Ovary (tissue), 10 donors: ENCODE measurements at regions of chr1 and their contacts with region 1.

Region 1: GRCh38 chr1:31789259-31790065 is 25.3 kb upstream of the ADGRB2 start:
- DNase-seq: peak; percentile 93 to 98 (median 98)
- H3K4me3 ChIP-seq: peak overlapping the region; percentile 43
- H3K27ac ChIP-seq: peak overlapping the region; percentile 11 to 70
- H3K4me1 ChIP-seq: no peaks in the 10 kb centered on the region
- H3K27me3 ChIP-seq: no peaks in the 10 kb centered on the region
- CTCF ChIP-seq: peak; percentile 79 to 96 (median 91)
- EP300 ChIP-seq: no peak
- POLR2A ChIP-seq: peak; percentile 29

Region 2: DNA sequence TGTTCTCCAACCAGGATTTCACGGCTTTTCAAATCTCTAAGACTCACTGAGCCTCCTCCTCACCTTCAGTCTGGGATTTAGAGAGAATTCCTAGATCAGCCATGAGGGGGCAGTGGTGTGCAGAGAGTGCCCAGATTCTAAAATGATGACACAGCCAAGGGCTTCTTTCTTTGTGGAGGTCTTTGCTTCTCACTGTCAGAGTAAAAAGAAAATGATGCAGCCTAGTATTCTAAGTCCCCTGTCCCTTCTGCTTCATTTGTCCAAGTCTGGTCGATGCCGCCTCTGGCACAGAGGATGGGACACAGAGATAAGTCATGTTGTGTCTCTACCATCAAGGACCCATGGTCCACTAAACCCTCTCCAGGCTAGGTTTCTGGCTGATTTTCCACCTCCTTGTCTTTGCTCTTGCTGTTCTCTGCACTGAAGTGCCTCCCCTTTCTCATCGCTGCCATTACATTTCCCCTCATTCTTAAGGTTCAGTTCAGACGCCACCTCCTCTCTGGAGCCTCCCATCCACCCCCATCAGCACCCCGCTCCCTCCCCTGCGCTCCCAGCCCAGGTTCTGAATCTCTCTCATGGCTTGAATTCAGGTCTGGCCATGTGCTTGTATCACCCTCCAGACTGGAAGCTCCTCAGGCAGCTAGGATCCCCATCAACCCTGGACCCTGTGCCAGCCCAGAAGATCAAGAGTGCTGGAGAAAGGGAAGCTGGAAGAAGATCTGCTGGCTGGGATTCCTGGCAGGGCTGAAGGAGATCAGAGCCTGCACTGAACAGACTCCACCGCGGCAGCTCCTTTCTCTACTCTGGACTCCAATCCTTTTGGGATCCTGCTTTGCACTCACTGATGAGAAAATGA is 225.1 kb before region 1 on chr1:
- intact Hi-C with region 1: loop called in 2 of 4 experiments (anchors 5 to 10 kb)
- DNase-seq: peak; percentile 53 to 73 (median 66)
- H3K4me3 ChIP-seq: no peak overlapping the region
- H3K27ac ChIP-seq: no peak overlapping the region
- H3K4me1 ChIP-seq: peaks cover 2% of the 10 kb centered on the region
- H3K27me3 ChIP-seq: no peaks in the 10 kb centered on the region
- CTCF ChIP-seq: peak; percentile 79 to 88 (median 87)
- EP300 ChIP-seq: no peak
- POLR2A ChIP-seq: no peak

Region 3: GRCh38 chr1:31663622-31664452 is 125.6 kb before region 1 on chr1:
- intact Hi-C with region 1: loop called (anchors 2 to 5 kb)
- DNase-seq: peak; percentile 58 to 82 (median 78)
- H3K4me3 ChIP-seq: no peak overlapping the region
- H3K27ac ChIP-seq: no peak overlapping the region
- H3K4me1 ChIP-seq: no peaks in the 10 kb centered on the region
- H3K27me3 ChIP-seq: no peaks in the 10 kb centered on the region
- CTCF ChIP-seq: peak; percentile 83 to 96 (median 93)
- EP300 ChIP-seq: no peak
- POLR2A ChIP-seq: no peak

Region 4: DNA sequence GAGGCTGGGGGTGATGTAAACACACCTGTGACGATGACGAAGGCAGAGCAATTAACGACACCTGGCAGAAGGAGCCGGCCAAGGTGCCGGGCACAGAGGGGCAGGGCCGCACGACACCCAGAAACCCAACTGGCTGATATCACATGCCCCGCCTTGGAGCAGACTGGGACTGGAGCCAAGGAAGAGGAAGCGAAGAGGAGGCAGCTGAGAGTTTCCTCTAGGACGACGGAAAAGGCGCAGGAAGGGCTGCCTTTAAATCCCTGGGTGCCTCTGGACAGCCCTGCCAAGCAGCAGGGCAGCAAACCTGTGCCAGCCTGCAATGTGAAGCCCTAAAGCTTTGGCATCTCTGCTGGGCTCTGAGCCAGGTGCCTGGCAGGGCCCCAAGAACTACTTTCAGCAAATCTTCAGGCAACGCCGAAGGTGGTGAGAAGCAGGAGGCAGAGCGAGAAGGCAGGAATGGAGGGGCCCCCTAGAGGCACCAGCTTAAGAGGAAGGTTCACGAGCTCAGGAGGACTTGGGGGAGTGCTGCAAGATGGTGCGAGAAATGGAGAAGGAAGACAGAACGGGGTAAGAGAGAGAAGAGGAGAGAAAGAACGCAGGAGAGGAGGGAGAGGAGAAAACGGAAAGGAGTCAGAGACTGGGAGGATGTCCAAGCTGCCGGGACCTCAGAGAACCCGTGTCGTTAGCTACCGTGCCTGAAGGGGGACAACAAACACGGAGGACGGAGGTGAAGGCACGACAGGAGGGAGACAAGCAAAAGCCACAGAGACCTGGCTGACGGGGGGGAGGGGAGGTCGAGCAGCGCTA is 119.5 kb before region 1 on chr1:
- intact Hi-C with region 1: loop called in 1 of 4 experiments (anchors 2 kb)
- DNase-seq: peak; percentile 79 to 84 (median 83)
- H3K4me3 ChIP-seq: peak overlapping the region; percentile 1
- H3K27ac ChIP-seq: peak overlapping the region; percentile 43 to 49
- H3K4me1 ChIP-seq: peaks cover 18% of the 10 kb centered on the region
- H3K27me3 ChIP-seq: no peaks in the 10 kb centered on the region
- CTCF ChIP-seq: no peak
- EP300 ChIP-seq: no peak
- POLR2A ChIP-seq: no peak

Region 5: DNA sequence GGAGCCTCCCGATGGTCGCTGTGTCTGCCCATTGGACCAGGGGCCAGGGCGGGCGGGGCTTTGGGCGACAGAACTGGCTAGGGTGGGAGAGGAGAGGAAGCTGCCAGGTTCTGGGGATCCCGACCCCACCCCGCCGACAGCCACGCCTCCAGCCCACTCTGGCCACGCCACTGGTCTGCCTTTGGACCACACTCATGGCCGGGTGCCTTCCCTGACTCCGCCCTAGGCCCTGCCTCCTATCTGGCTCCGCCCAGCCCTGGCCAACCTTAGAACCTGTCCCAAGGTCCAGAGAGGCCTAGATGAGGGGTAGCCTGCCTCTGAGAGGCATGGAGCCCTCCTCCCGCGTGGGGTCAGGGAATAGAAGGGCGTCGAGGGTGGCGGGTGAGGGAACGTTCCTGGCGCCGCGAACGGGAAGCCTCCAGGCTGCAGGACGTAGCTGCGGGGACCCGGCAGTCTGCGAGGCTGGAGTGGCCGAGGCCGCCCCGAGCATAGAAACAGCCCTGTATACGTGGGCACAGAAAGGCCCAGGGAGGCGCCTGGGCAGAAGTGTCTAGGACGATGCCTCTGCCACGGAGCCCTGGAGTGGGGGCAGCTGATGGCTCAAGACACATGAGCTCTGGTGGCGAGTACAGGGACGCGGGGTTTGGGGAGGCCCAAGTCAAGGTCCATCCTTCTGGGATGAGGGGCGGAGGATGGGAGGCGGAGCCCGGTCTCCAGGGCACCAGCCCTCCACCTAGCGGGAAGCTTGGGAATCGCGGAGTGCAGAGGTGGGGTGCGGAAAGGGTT is 74.2 kb before region 1 on chr1:
- intact Hi-C with region 1: loop called in 1 of 4 experiments (anchors 5 kb)
- DNase-seq: peak; percentile 96 to 98 (median 96)
- H3K4me3 ChIP-seq: peak overlapping the region; percentile 33
- H3K27ac ChIP-seq: peak overlapping the region; percentile 92 to 97
- H3K4me1 ChIP-seq: peaks cover 17% of the 10 kb centered on the region
- H3K27me3 ChIP-seq: no peaks in the 10 kb centered on the region
- CTCF ChIP-seq: peak; percentile 91 to 93 (median 91)
- EP300 ChIP-seq: no peak
- POLR2A ChIP-seq: peak; percentile 62

Region 6: GRCh38 chr1:31745096-31745945 is 44.1 kb before region 1 on chr1:
- intact Hi-C with region 1: no loop called
- DNase-seq: peak; percentile 58 to 85 (median 78)
- H3K4me3 ChIP-seq: no peak overlapping the region
- H3K27ac ChIP-seq: no peak overlapping the region
- H3K4me1 ChIP-seq: no peaks in the 10 kb centered on the region
- H3K27me3 ChIP-seq: no peaks in the 10 kb centered on the region
- CTCF ChIP-seq: peak; percentile 48 to 81 (median 69)
- EP300 ChIP-seq: no peak
- POLR2A ChIP-seq: no peak

Region 7: DNA sequence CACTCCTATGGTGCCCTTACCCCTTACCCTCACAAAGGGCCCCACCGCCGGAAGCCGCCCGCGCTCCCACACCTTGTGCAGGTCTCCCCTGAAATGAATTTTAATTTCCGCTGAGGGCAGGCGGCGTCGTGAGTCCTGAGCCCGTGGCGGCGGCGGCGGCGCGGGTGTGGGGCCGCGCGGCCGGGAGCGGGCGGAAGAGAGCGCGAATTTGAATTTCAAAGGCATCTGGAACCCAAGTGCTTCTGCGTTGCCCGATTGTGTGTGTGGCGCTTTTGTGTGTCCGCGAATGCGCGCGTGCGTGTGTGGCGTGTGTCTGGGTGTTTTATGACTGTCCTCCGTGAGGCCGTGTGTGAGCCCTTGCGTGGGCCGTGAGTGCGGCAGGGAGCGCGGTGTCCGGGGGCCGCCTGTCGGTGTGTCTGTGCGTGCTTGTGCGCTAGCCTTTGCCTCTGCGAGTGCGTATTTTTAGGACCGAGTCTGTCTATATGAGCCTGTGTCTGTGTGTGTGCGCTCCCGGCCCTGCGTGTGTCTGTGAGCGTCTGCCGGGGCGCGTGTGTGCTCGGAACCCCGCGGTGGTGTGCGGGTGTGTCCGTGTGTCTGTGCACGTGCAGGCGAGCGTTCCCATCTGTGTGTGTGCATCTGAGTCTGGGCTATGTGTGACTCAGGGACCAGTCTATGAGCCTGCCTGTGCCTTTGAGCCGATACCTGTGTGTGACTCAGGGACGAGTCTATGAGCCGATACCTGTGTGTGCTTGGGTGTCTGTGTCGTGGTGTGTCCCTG is 17.4 kb before region 1 on chr1:
- intact Hi-C with region 1: no loop called
- DNase-seq: no peak
- H3K4me3 ChIP-seq: no peak overlapping the region
- H3K27ac ChIP-seq: no peak overlapping the region
- H3K4me1 ChIP-seq: peaks cover 9% of the 10 kb centered on the region
- H3K27me3 ChIP-seq: no peaks in the 10 kb centered on the region
- CTCF ChIP-seq: peak in 1 of 3 donors; percentile 11
- EP300 ChIP-seq: no peak
- POLR2A ChIP-seq: no peak

Region 8: GRCh38 chr1:31866450-31867032 is 77.1 kb after region 1 on chr1:
- intact Hi-C with region 1: no loop called
- DNase-seq: no peak
- H3K4me3 ChIP-seq: no peak overlapping the region
- H3K27ac ChIP-seq: no peak overlapping the region
- H3K4me1 ChIP-seq: no peaks in the 10 kb centered on the region
- H3K27me3 ChIP-seq: no peaks in the 10 kb centered on the region
- CTCF ChIP-seq: no peak
- EP300 ChIP-seq: no peak
- POLR2A ChIP-seq: no peak

Region 9: DNA sequence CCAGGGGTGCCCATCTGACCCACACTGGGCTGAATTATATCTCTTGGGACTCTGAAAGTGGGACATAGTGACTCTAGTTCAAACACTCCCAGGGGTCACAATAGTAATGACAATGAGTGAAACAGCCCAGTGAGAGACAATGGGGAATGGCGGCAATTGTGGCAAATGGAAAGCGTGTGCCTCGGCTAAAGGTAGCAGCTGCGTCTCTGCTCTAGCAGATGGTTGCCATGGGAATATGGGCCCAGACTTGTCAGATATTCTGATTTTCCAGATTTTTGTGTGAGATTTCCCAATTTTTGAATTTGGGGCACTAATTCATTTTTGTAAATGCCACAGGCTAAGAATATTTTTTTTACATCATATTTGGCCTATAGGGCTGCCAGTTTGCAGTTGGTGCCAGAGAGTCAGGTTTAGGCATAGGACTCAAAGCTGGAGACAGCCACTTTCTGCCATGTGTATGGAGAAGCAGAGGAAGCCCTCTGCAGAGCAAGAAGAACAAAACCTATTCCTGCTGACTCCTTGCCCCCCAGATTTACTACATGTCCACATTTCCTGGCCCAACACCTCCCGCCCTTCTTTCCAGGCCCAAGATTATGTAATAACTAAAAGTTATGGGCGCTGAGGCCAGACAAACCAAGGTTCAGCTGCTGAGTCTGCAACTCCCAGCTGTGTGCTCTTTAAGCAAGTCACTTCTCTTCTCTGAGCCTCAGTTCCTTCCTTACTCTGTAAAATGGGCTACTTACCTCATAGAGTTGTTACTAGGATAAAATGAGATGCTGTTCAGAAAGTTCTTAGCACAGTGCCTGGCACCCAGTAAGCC is 170.3 kb after region 1 on chr1:
- intact Hi-C with region 1: loop called in 2 of 4 experiments (anchors 10 kb)
- DNase-seq: peak in 1 of 5 donors; percentile 39
- H3K4me3 ChIP-seq: no peak overlapping the region
- H3K27ac ChIP-seq: no peak overlapping the region
- H3K4me1 ChIP-seq: peaks cover 10% of the 10 kb centered on the region
- H3K27me3 ChIP-seq: no peaks in the 10 kb centered on the region
- CTCF ChIP-seq: no peak
- EP300 ChIP-seq: no peak
- POLR2A ChIP-seq: no peak